WTC11 (cell line): ENCODE measurements at regions of chr1 and their contacts with region 1.

Region 1: GRCh38 chr1:160098852-160099561 is 588 bp upstream of the IGSF8 start:
- DNase-seq: peak; percentile 99
- ATAC-seq: peak; percentile 78
- H3K4me3 Mint-ChIP-seq: peak overlapping the region; percentile 69
- H3K27ac Mint-ChIP-seq: peak overlapping the region; percentile 88
- H3K4me1 Mint-ChIP-seq: peaks cover 71% of the 10 kb centered on the region
- H3K27me3 Mint-ChIP-seq: peaks cover 5% of the 10 kb centered on the region; the same call in 1 of the 2 replicates
- CTCF ChIP-seq: no peak

Region 2: DNA sequence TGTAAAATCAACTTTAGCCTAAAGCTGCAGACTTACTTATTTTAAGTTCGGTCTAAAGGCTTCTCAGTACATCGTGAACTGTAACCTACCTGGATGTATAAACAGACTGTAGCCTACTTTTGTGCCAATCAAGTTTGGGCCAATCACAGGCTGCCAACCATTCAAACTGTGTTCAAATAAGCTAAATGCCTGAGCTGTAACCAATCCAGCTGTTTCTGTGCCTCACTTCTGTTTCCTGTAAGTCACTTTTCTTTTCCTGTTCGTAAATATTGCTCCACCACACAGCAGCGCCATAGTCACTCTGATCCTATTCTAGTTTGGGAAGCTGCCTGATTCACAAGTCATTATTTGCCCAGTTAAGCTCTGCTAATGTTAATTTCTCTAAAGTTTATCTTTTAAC is 107.5 kb before region 1 on chr1:
- CTCF ChIA-PET with region 1: no interaction called
- POLR2A ChIA-PET with region 1: no interaction called
- DNase-seq: no peak
- ATAC-seq: no peak
- H3K4me3 Mint-ChIP-seq: no peak overlapping the region
- H3K27ac Mint-ChIP-seq: no peak overlapping the region
- H3K4me1 Mint-ChIP-seq: peaks cover 10% of the 10 kb centered on the region
- H3K27me3 Mint-ChIP-seq: no peaks in the 10 kb centered on the region; the same call in 1 of the 2 replicates
- CTCF ChIP-seq: no peak

Region 3: GRCh38 chr1:160058087-160058486 is 40.9 kb before region 1 on chr1:
- CTCF ChIA-PET with region 1: interaction called, 12 read pairs
- POLR2A ChIA-PET with region 1: no interaction called
- DNase-seq: no peak
- ATAC-seq: peak; percentile 53
- H3K4me3 Mint-ChIP-seq: no peak overlapping the region
- H3K27ac Mint-ChIP-seq: no peak overlapping the region
- H3K4me1 Mint-ChIP-seq: peaks cover 18% of the 10 kb centered on the region
- H3K27me3 Mint-ChIP-seq: peaks cover 7% of the 10 kb centered on the region
- CTCF ChIP-seq: no peak

Region 4: DNA sequence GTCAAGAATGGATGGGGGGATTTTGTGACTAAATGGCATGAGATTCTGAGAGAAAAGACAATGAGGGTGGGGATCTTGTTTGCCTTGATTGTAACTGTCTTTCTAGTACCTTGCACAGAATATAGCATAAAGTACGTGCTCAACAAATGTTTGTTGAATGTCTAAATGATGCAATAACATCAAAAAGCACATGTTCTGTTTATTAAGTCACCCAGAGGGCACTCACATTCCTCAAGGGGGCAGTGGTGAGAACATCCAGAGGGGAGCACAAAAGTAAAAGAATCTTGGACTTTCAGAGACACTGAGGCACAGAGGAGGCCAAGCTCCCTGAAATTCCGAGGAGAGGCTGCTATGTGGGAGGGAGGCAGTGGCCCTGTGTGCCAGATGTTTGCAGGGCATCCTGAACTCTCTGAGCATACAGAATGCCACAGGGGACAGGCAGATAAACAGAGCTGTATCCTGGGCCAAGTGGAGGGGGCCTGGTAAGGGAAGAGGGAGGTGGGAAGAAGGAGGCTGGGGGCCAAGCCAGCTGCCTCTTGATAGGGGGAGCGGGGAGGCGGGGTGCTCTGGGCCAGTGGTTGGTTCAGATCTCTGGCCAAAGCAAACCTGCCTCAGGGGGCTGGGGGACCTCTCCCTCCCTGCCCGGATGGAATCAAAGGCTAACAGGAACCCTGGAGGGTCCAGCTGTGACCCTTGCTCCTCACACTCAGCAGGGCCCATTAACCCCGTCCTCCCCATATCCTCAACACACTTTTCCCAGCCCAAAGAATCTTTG is 10.1 kb after region 1 on chr1:
- CTCF ChIA-PET with region 1: interaction called, 31 read pairs
- POLR2A ChIA-PET with region 1: interaction called, 4 read pairs
- DNase-seq: no peak
- ATAC-seq: peak; percentile 61
- H3K4me3 Mint-ChIP-seq: no peak overlapping the region; the same call in 1 of the 2 replicates
- H3K27ac Mint-ChIP-seq: peak overlapping the region; percentile 30
- H3K4me1 Mint-ChIP-seq: peaks cover 50% of the 10 kb centered on the region
- H3K27me3 Mint-ChIP-seq: peaks cover 5% of the 10 kb centered on the region; the same call in 1 of the 2 replicates
- CTCF ChIP-seq: peak; percentile 33; the same call in 1 of the 2 replicates

Region 5: GRCh38 chr1:160161965-160162705 is 63.1 kb after region 1 on chr1:
- CTCF ChIA-PET with region 1: interaction called, 14 read pairs
- POLR2A ChIA-PET with region 1: no interaction called
- DNase-seq: peak; percentile 78
- ATAC-seq: peak; percentile 98
- H3K4me3 Mint-ChIP-seq: no peak overlapping the region
- H3K27ac Mint-ChIP-seq: no peak overlapping the region
- H3K4me1 Mint-ChIP-seq: peaks cover 20% of the 10 kb centered on the region
- H3K27me3 Mint-ChIP-seq: peaks cover 14% of the 10 kb centered on the region
- CTCF ChIP-seq: peak; percentile 59

Region 6: DNA sequence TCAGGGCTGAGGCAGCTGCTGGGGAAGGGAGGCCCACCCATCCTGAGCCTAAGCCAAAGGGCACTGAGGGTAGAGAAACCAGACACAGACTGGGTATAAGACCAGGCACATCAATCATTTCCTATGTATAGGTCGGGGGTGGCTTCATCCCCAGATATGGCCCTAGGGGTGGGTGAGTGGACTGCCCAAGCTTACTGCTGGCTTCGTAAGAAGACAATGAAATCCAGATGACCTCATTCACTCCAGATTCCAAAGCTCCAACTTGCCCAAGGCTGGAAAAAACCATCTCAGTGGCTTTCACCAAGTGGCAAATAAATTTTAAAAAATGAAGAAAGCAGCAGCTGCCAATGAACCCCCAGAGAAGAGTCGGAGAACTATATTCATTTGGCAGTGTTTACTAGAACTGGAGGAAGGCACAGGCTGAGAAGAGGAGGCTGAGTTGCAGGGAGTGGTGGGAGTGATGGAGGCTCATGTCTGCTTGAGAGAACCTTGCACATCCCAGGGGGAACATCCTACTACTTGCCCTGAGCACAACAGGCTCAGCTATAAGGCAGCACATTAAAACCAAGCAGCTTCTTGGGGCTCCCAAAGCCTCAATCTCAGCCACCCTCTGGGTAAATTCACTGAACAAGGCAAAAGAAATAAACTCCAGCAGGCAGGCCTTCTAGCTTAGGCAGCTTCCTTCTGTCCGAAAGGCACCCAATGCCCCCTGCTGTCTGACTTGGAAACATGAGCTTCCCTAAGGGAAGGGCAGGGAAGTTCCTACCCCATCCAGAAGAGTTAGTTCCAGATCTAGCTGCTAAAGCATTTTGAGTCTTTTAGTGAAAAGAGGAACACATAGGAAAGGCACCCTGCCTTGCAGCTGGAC is 120.3 kb after region 1 on chr1:
- CTCF ChIA-PET with region 1: interaction called, 90 read pairs
- POLR2A ChIA-PET with region 1: no interaction called
- DNase-seq: peak; percentile 69
- ATAC-seq: peak; percentile 87
- H3K4me3 Mint-ChIP-seq: no peak overlapping the region
- H3K27ac Mint-ChIP-seq: peak overlapping the region; percentile 79
- H3K4me1 Mint-ChIP-seq: peaks cover 15% of the 10 kb centered on the region
- H3K27me3 Mint-ChIP-seq: no peaks in the 10 kb centered on the region
- CTCF ChIP-seq: no peak